Mammary epithelial cell (primary cell): ENCODE measurements at regions of chr3 and their contacts with region 1.

Region 1: GRCh38 chr3:122760453-122761271 is 33.0 kb downstream of the HSPBAP1 start:
- DNase-seq: no peak
- H3K4me3 ChIP-seq: no peak overlapping the region
- H3K27ac ChIP-seq: no peak overlapping the region
- H3K4me1 ChIP-seq: peaks cover 3% of the 10 kb centered on the region
- H3K27me3 ChIP-seq: no peaks in the 10 kb centered on the region
- CTCF ChIP-seq: no peak

Region 2: GRCh38 chr3:122635789-122636188 is 124.9 kb before region 1 on chr3:
- CTCF ChIA-PET with region 1: no interaction called
- dilution Hi-C with region 1: no loop called
- in situ Hi-C with region 1: no loop called
- intact Hi-C with region 1: no loop called
- DNase-seq: peak; percentile 50
- H3K4me3 ChIP-seq: no peak overlapping the region
- H3K27ac ChIP-seq: peak overlapping the region; percentile 4
- H3K4me1 ChIP-seq: peaks cover 19% of the 10 kb centered on the region
- H3K27me3 ChIP-seq: no peaks in the 10 kb centered on the region
- CTCF ChIP-seq: no peak

Region 3: DNA sequence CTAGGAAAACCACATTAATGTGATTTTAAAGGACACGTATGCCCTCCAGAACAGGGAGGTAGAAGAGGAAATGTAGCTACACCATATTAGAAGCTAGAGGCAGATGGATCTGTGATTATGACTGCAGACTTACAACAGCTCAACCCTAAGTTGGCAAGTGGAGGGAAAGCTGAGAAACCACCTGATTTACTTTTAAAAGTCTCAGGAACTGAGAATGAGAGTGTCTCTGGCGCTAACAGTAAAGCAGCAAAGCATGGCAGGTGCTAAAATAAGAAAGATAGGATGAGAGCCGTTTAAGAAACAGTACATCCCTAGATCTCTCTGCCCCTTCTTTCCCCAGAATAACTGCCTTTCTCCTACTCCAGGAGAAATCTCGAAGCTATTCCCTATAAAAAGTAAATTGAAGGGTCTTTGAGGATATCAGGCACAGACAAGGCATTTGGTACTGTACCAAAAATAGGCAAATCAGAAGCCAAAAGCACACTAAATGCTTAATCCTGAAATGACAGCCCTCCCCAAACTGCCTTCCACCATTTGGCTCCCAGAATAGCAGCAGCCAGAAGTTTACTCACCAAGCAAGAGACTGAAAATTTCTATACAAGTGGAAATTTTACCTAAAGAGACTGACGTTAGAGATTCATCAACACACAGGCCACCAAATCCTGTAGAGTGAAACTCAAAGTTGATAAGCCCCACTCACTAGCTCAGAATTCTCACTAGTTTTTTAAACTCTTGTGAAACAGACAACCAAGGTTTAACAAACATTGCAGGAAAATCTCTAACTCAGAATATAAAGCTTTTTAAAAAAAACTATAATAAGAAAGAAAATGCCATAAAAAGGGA is 114.3 kb before region 1 on chr3:
- CTCF ChIA-PET with region 1: interaction called, 10 read pairs
- dilution Hi-C with region 1: no loop called
- in situ Hi-C with region 1: no loop called
- intact Hi-C with region 1: no loop called
- DNase-seq: no peak
- H3K4me3 ChIP-seq: no peak overlapping the region
- H3K27ac ChIP-seq: no peak overlapping the region
- H3K4me1 ChIP-seq: no peaks in the 10 kb centered on the region
- H3K27me3 ChIP-seq: no peaks in the 10 kb centered on the region
- CTCF ChIP-seq: no peak

Region 4: DNA sequence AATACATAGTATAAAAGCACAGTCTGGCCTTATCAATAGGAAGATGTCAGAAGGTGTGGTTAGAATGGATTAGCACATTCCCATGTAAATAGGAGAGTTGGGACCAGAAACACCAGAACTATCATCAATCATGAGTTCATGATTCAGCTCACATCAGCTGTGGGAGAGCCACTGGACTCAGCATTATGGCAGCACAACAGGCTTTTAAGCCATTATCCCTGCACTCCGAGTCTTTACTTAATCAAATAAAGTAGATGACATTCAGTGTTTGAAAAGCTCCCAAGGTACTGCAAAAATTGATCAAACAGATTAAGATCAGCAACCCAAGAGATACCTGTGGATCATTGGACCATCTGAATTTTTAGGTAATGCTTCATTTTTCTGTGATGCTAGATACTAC is 55.3 kb before region 1 on chr3:
- CTCF ChIA-PET with region 1: no interaction called
- dilution Hi-C with region 1: no loop called
- in situ Hi-C with region 1: no loop called
- intact Hi-C with region 1: no loop called
- DNase-seq: no peak
- H3K4me3 ChIP-seq: no peak overlapping the region
- H3K27ac ChIP-seq: no peak overlapping the region
- H3K4me1 ChIP-seq: no peaks in the 10 kb centered on the region
- H3K27me3 ChIP-seq: no peaks in the 10 kb centered on the region
- CTCF ChIP-seq: no peak

Region 5: GRCh38 chr3:123064546-123065313 is 304.1 kb after region 1 on chr3:
- CTCF ChIA-PET with region 1: interaction called, 24 read pairs
- dilution Hi-C with region 1: no loop called
- in situ Hi-C with region 1: no loop called
- intact Hi-C with region 1: no loop called
- DNase-seq: no peak
- H3K4me3 ChIP-seq: no peak overlapping the region
- H3K27ac ChIP-seq: no peak overlapping the region
- H3K4me1 ChIP-seq: peaks cover 27% of the 10 kb centered on the region
- H3K27me3 ChIP-seq: no peaks in the 10 kb centered on the region
- CTCF ChIP-seq: no peak